Natural killer cell (primary cell): ENCODE measurements at regions of chr15 and their contacts with region 1.

Region 1: GRCh38 chr15:58980351-58980939 is 7.0 kb upstream of the RNF111 start:
- DNase-seq: peak in 1 of 2 donors; percentile 73
- ATAC-seq: peak in 1 of 3 donors; percentile 57
- H3K4me3 ChIP-seq: no peak overlapping the region
- H3K4me3 Mint-ChIP-seq: no peak overlapping the region
- H3K27ac ChIP-seq: no peak overlapping the region
- H3K27ac Mint-ChIP-seq: no peak overlapping the region
- H3K4me1 ChIP-seq: peaks cover 22% of the 10 kb centered on the region
- H3K4me1 Mint-ChIP-seq: peaks cover 20% of the 10 kb centered on the region in 2 donors
- H3K27me3 ChIP-seq: no peaks in the 10 kb centered on the region
- H3K27me3 Mint-ChIP-seq: no peaks in the 10 kb centered on the region
- CTCF ChIP-seq: peak; percentile 70

Region 2: GRCh38 chr15:59138243-59138642 is 157.8 kb after region 1 on chr15:
- intact Hi-C with region 1: loop called (anchors 1 kb)
- DNase-seq: peak; percentile 35 to 72
- ATAC-seq: peak; percentile 72 to 86 (median 73)
- H3K4me3 ChIP-seq: no peak overlapping the region
- H3K4me3 Mint-ChIP-seq: no peak overlapping the region
- H3K27ac ChIP-seq: no peak overlapping the region
- H3K27ac Mint-ChIP-seq: no peak overlapping the region
- H3K4me1 ChIP-seq: no peaks in the 10 kb centered on the region
- H3K4me1 Mint-ChIP-seq: no peaks in the 10 kb centered on the region
- H3K27me3 ChIP-seq: no peaks in the 10 kb centered on the region
- H3K27me3 Mint-ChIP-seq: no peaks in the 10 kb centered on the region
- CTCF ChIP-seq: peak; percentile 27

Region 3: DNA sequence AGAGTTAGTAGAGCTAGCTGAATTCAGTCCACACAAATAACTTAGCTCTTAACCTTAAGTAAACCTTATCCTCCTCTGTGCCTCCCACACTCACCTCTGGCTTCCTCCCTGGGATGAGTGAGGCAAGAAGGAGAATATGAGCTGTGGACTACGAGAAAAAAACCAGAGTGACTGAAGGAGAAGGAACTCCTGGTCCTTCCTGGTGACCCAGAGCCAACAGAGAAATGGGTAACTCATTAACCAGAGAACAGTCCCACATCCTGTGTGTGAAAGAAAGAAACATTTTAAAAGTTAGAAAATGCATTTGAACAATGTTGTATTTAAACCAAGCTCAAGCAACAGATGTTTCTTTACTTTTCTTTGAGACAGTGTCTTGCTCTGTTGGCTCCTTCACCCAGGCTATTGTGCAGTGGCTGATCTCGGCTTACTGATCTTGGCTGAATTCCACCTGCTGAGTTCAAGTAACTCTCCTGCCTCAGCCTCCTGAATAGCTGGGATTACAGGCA is 430.0 kb after region 1 on chr15:
- intact Hi-C with region 1: loop called (anchors 2 kb)
- DNase-seq: no peak
- ATAC-seq: no peak
- H3K4me3 ChIP-seq: no peak overlapping the region
- H3K4me3 Mint-ChIP-seq: peak overlapping the region; percentile 2
- H3K27ac ChIP-seq: no peak overlapping the region
- H3K27ac Mint-ChIP-seq: no peak overlapping the region
- H3K4me1 ChIP-seq: peaks cover 62% of the 10 kb centered on the region
- H3K4me1 Mint-ChIP-seq: peaks cover 42 to 50% of the 10 kb centered on the region in 2 donors
- H3K27me3 ChIP-seq: peaks cover 8% of the 10 kb centered on the region
- H3K27me3 Mint-ChIP-seq: peaks cover 14 to 23% of the 10 kb centered on the region in 2 donors
- CTCF ChIP-seq: no peak